ENCODE measurements at regions of chr7 and their contacts with region 1.

Region 1: DNA sequence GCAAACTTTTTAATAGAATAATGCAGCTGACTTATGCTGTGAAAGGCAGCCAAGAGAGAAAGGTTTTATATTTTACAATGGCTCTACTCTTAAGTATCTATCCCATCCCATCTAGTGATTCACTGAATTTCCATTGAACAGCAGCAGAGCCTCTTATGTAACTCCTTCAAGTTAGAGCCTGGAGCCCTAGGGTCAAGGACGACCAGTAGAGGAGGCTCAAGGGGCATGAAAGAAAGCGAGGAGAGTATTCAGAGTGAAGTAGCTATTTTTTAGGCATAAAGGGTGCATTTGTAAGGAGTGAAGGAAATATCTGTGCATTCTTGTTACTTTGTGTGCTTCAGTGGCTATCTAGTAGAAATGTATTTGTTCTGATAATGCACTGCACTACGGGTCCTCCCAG is 180.2 kb upstream of the TPK1 start:
- DNase-seq: no peak
- ATAC-seq: no peak
- H3K4me3 ChIP-seq: no peak overlapping the region
- H3K27ac ChIP-seq: no peak overlapping the region
- H3K4me1 ChIP-seq: no peaks in the 10 kb centered on the region
- H3K27me3 ChIP-seq: no peaks in the 10 kb centered on the region
- CTCF ChIP-seq: peak in 1 of 9 donors; percentile 9

Region 2: GRCh38 chr7:144738708-144739314 is 277.3 kb before region 1 on chr7:
- intact Hi-C with region 1: loop called in 1 of 10 experiments (anchors 5 kb)
- DNase-seq: peak in 1 of 2 donors; percentile 6
- ATAC-seq: peak in 3 of 8 donors; percentile 42 to 46 (median 42)
- H3K4me3 ChIP-seq: no peak overlapping the region
- H3K27ac ChIP-seq: no peak overlapping the region
- H3K4me1 ChIP-seq: peaks cover 0 to 9% (median 0%) of the 10 kb centered on the region in 9 donors
- H3K27me3 ChIP-seq: no peaks in the 10 kb centered on the region
- CTCF ChIP-seq: peak; percentile 30 to 82 (median 71)

Region 3: GRCh38 chr7:144892761-144893160 is 123.3 kb before region 1 on chr7:
- intact Hi-C with region 1: no loop called
- DNase-seq: no peak
- ATAC-seq: no peak
- H3K4me3 ChIP-seq: no peak overlapping the region
- H3K27ac ChIP-seq: no peak overlapping the region
- H3K4me1 ChIP-seq: no peaks in the 10 kb centered on the region
- H3K27me3 ChIP-seq: peaks cover 0 to under 1% (median 0%) of the 10 kb centered on the region in 7 donors
- CTCF ChIP-seq: no peak

Region 4: GRCh38 chr7:145534301-145534700 is 518.2 kb after region 1 on chr7:
- intact Hi-C with region 1: no loop called
- DNase-seq: no peak
- ATAC-seq: no peak
- H3K4me3 ChIP-seq: no peak overlapping the region
- H3K27ac ChIP-seq: no peak overlapping the region
- H3K4me1 ChIP-seq: no peaks in the 10 kb centered on the region
- H3K27me3 ChIP-seq: no peaks in the 10 kb centered on the region
- CTCF ChIP-seq: no peak

Measured in heart right ventricle (tissue), 16 donors.